ENCODE measurements at regions of chr15 and their contacts with region 1.

Region 1: GRCh38 chr15:74873036-74873755 is at the start of gene SCAMP2:
- DNase-seq: peak; percentile 96
- ATAC-seq: peak; percentile 93
- H3K4me3 Mint-ChIP-seq: peak within 1 kb of the TSS; percentile 95
- H3K27ac Mint-ChIP-seq: peak within 1 kb of the TSS; percentile 92
- H3K4me1 Mint-ChIP-seq: peaks cover 36% of the 10 kb centered on the region
- H3K27me3 Mint-ChIP-seq: no peaks in the 10 kb centered on the region
- CTCF ChIP-seq: no peak
- total RNA-seq, gene SCAMP2: 57.8 to 58.9 TPM

Region 2: DNA sequence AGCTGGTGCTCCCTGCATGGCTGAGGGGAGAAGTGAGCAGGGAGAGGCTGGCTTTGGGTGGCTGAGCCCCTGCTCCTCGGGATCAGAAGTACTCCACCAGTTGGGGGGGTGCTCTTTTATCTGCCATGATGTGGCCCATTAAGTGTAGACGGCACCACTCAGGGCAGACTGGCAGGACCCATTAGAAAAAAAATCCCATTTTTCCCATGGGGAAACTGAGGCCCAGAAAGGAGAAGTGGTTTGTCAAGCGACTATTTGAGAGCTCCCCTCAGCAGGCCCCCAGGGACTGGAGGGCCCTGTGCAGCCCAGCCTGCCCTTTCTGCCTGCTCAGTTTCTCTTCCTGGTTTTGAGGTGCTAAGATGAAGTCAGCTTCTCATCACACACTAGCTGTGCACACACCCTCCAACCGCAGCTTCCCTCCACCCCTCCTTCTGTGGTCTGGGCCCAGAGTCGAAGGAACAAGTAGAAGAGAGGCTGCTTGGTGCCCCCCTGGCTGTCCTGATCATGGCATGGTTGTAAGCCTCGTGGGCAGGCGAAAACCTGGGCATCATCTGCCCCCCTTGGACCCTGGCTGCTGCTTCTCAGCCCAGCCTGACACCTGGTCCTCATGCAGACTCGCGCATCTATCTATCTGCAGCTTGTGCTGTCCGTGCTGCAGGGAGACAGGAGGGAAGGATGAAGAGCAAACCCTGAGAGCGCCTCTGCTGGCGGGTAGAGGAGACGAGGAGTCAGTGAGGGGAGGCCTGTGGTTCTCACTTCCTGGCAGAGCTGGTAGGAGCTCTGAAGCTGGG is 85.8 kb before region 1 on chr15:
- CTCF ChIA-PET with region 1: interaction called, 8 read pairs
- POLR2A ChIA-PET with region 1: interaction called, 10 read pairs
- intact Hi-C with region 1: no loop called
- DNase-seq: peak; percentile 98
- ATAC-seq: peak; percentile 70
- H3K4me3 Mint-ChIP-seq: peak overlapping the region; percentile 98
- H3K27ac Mint-ChIP-seq: peak overlapping the region; percentile 98
- H3K4me1 Mint-ChIP-seq: peaks cover 53% of the 10 kb centered on the region
- H3K27me3 Mint-ChIP-seq: no peaks in the 10 kb centered on the region
- CTCF ChIP-seq: peak; percentile 81

Region 3: DNA sequence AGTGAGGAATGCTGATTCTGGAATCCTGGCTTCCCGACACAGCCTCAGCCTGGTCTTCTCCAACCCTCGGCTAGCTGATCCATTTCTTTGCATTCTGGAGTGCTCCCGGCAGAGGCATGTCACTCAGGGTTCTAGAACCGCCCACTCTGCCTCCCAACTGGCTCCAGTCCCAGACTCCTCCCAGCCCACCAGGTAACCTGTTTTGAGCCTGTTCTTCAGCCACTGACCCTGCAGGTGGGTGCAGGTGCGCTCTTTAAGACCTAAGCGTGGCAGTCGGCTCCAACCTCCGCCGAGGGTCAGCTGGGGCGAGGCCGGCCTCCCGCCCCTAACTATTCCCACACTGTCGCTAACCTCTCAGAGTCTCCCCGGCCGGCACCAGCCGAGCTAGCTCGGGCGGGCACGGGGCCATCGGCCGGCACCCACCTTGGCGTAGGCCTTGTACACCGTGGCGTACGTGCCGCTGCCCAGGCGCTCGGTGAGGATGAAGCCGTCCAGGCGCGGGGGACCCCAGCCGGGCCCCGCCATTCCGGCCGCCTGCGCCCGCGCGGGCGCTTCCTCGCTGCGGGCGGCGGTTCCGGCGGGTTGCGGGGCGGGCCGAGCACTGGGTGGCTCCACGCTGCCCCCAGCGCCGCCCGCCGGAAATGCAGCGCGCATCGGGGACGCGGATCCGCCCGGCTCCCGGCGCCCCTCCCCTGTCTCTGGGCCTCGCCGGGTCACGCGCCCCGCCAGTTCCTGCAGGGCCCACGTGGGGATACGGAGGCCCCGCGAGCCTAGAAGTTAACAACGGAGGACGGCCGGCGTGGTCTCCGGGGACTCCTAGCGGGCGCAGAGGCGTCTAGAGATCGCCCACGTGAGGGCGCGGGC is 30.4 kb before region 1 on chr15 and contains the start of gene ULK3:
- CTCF ChIA-PET with region 1: interaction called, 5 read pairs
- POLR2A ChIA-PET with region 1: interaction called, 18 read pairs
- intact Hi-C with region 1: no loop called
- DNase-seq: peak; percentile 94
- ATAC-seq: peak; percentile 92
- H3K4me3 Mint-ChIP-seq: peak within 1 kb of the TSS; percentile 90
- H3K27ac Mint-ChIP-seq: peak within 1 kb of the TSS; percentile 94
- H3K4me1 Mint-ChIP-seq: peaks cover 44% of the 10 kb centered on the region
- H3K27me3 Mint-ChIP-seq: no peaks in the 10 kb centered on the region
- CTCF ChIP-seq: peak; percentile 89
- total RNA-seq, gene ULK3: 45.9 to 49.3 TPM

Region 4: GRCh38 chr15:74857082-74857655 is 16.0 kb before region 1 on chr15:
- CTCF ChIA-PET with region 1: interaction called, 11 read pairs
- POLR2A ChIA-PET with region 1: interaction called, 9 read pairs
- intact Hi-C with region 1: no loop called
- DNase-seq: no peak
- ATAC-seq: peak; percentile 31
- H3K4me3 Mint-ChIP-seq: no peak overlapping the region
- H3K27ac Mint-ChIP-seq: peak overlapping the region; percentile 84
- H3K4me1 Mint-ChIP-seq: peaks cover 32% of the 10 kb centered on the region
- H3K27me3 Mint-ChIP-seq: no peaks in the 10 kb centered on the region
- CTCF ChIP-seq: no peak

Region 5: GRCh38 chr15:74897300-74897701 is 24.1 kb after region 1 on chr15:
- CTCF ChIA-PET with region 1: interaction called, 37 read pairs
- POLR2A ChIA-PET with region 1: interaction called, 10 read pairs
- intact Hi-C with region 1: no loop called
- DNase-seq: no peak
- ATAC-seq: no peak
- H3K4me3 Mint-ChIP-seq: no peak overlapping the region
- H3K27ac Mint-ChIP-seq: no peak overlapping the region
- H3K4me1 Mint-ChIP-seq: peaks cover 25% of the 10 kb centered on the region
- H3K27me3 Mint-ChIP-seq: no peaks in the 10 kb centered on the region
- CTCF ChIP-seq: no peak

Region 6: DNA sequence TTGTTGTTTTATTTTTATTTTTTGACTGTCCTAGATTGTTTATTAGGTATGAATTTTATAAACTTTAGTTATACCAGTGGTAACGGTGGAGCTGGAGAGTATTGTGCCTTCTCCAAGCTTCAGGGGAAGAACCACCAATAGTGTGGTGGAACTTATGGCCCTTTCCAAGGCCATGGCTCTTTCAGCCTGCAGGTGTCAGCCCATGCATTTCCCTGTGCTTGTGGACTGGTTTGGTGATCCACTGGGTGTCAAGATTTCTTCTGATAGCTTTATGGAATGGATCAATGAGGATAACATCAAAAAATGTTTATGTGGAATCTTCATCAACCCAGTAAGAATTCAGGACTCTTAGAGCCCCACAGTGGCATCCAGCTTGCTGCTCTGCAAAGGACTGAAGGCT is 103.0 kb after region 1 on chr15:
- CTCF ChIA-PET with region 1: no interaction called
- POLR2A ChIA-PET with region 1: no interaction called
- intact Hi-C with region 1: no loop called
- DNase-seq: no peak
- ATAC-seq: no peak
- H3K4me3 Mint-ChIP-seq: no peak overlapping the region
- H3K27ac Mint-ChIP-seq: no peak overlapping the region
- H3K4me1 Mint-ChIP-seq: peaks cover 14% of the 10 kb centered on the region
- H3K27me3 Mint-ChIP-seq: peaks cover 12% of the 10 kb centered on the region
- CTCF ChIP-seq: no peak

Region 7: GRCh38 chr15:75198560-75199346 is 325.6 kb after region 1 on chr15:
- CTCF ChIA-PET with region 1: no interaction called
- POLR2A ChIA-PET with region 1: no interaction called
- intact Hi-C with region 1: no loop called
- DNase-seq: peak; percentile 55
- ATAC-seq: no peak
- H3K4me3 Mint-ChIP-seq: no peak overlapping the region
- H3K27ac Mint-ChIP-seq: no peak overlapping the region
- H3K4me1 Mint-ChIP-seq: peaks cover 30% of the 10 kb centered on the region
- H3K27me3 Mint-ChIP-seq: peaks cover 3% of the 10 kb centered on the region
- CTCF ChIP-seq: no peak

Measured in activated CD8-positive, alpha-beta T cell treated with anti-CD3 and anti-CD28 coated beads for 36 hours (primary cell).